ENCODE measurements at regions of chr22 and their contacts with region 1.

Region 1: DNA sequence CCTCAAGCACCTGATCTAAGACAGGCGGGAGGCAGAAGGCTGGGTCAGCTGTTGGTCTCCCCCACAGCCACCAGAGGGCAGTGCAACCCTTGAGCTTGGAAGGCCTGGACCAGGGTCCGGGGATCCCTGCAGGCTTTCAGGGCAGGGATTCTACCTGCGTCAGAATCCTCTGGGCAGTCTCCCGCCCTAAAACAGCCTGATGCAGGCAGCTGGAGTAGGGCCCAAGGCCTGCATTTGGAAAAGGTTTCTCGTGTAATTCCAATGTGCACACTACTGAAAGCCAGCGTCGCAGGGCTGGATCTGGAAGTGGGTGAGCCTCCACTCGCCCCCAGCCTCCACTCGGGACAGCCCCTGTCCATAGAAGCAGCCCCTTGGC is 31.8 kb downstream of the BID start:
- DNase-seq: no peak
- ATAC-seq: peak; percentile 98
- H3K4me3 ChIP-seq: no peak overlapping the region
- H3K27ac ChIP-seq: no peak overlapping the region
- H3K4me1 ChIP-seq: peaks cover 7% of the 10 kb centered on the region
- H3K27me3 ChIP-seq: no peaks in the 10 kb centered on the region
- CTCF ChIP-seq: peak; percentile 84 to 94 (median 90)
- EP300 ChIP-seq: no peak
- POLR2A ChIP-seq: no peak; the same call in 1 of the 2 replicates
- RAD21 ChIP-seq: peak; percentile 98

Region 2: DNA sequence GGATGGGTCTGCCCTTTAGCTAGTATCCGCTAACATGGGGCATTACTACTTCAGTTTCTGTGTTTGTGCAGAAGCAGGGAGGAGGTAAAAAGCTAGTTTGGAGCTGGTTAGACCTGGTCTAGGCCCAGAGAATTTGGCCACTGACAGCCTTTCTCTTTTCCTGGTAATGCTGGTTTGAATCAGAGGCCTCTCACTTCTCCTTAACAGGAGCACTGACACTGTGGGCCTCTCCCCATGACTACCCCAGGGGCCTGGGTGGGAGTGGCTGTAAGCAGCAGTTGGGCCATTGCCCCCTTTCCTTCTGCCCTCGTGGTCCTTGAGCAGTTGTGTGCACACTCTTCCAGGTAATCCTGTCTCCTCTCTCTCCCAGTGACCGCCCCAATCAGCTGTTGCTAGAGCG is 187.7 kb before region 1 on chr22:
- CTCF ChIA-PET with region 1: interaction called, 32 read pairs
- POLR2A ChIA-PET with region 1: no interaction called
- RAD21 ChIA-PET with region 1: interaction called, 4 read pairs
- SMC1A ChIA-PET with region 1: interaction called, 9 read pairs
- in situ Hi-C with region 1: no loop called
- intact Hi-C with region 1: loop called (anchors 5 kb)
- DNase-seq: no peak
- ATAC-seq: no peak
- H3K4me3 ChIP-seq: no peak overlapping the region
- H3K27ac ChIP-seq: no peak overlapping the region
- H3K4me1 ChIP-seq: no peaks in the 10 kb centered on the region
- H3K27me3 ChIP-seq: no peaks in the 10 kb centered on the region; a peak in 1 of 4 replicates
- CTCF ChIP-seq: no peak
- EP300 ChIP-seq: no peak
- POLR2A ChIP-seq: no peak
- RAD21 ChIP-seq: no peak

Region 3: GRCh38 chr22:17754233-17754925 is 11.9 kb after region 1 on chr22:
- CTCF ChIA-PET with region 1: interaction called, 10 read pairs
- POLR2A ChIA-PET with region 1: interaction called, 3 read pairs
- RAD21 ChIA-PET with region 1: interaction called, 3 read pairs
- SMC1A ChIA-PET with region 1: no interaction called
- in situ Hi-C with region 1: no loop called
- intact Hi-C with region 1: no loop called
- DNase-seq: no peak
- ATAC-seq: peak; percentile 82
- H3K4me3 ChIP-seq: no peak overlapping the region
- H3K27ac ChIP-seq: no peak overlapping the region
- H3K4me1 ChIP-seq: no peaks in the 10 kb centered on the region
- H3K27me3 ChIP-seq: no peaks in the 10 kb centered on the region
- CTCF ChIP-seq: peak; percentile 30 to 57 (median 52); a peak in 4 of 6 replicates
- EP300 ChIP-seq: no peak
- POLR2A ChIP-seq: no peak
- RAD21 ChIP-seq: peak; percentile 45; the same call in 1 of the 2 replicates

Region 4: DNA sequence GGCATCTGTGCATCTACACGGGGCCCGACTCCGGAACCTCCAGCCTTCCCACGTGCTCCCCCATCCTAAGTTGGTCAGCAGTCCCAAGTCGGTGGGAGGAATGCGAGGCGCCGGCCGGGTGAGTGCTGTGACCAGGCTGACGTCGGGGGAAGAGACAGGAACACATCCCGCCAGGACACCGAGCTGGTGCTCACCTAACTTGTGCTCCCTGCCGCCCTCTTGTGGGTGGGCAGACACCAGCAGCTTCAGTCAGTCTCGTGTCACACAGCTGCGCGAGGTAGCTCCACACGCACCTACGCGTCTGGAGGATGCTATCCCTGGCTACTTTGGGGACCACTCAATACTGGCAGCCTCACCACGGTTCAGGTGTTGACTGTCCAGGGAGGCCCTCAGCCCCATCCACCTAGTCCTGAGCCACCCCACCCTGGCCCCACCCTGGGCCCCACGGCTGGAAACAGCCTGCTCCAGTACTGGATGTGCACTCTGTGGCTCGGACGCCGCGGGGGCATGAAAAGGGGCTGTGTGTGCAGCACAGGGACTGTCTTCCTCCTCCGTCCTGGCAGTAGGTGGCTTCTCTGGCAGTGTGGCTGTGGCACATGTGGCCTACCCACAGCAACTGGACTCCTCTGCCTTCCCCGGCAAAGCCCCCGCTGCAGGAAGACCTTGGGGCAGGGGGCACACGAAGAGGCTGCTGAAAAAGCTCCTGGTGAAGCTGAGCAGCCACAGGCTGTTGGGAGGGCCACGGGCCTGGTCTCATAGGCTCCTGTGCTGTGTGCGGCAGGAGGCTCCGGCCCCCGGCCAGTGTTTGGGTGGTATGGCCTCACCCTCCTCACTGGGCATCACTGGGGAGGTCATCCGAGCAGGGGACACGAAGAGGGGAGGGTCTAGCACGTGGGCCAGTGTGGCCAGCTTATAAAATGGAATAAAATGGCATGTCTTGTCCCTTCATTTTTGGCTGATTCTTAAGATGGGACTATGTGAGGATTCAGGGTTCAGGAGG is 43.0 kb after region 1 on chr22:
- CTCF ChIA-PET with region 1: interaction called, 101 read pairs
- POLR2A ChIA-PET with region 1: interaction called, 5 read pairs
- RAD21 ChIA-PET with region 1: interaction called, 58 read pairs
- SMC1A ChIA-PET with region 1: interaction called, 46 read pairs
- in situ Hi-C with region 1: no loop called
- intact Hi-C with region 1: loop called (anchors 1 kb)
- DNase-seq: no peak
- ATAC-seq: peak; percentile 67
- H3K4me3 ChIP-seq: no peak overlapping the region
- H3K27ac ChIP-seq: no peak overlapping the region
- H3K4me1 ChIP-seq: peaks cover 26% of the 10 kb centered on the region
- H3K27me3 ChIP-seq: no peaks in the 10 kb centered on the region
- CTCF ChIP-seq: peak; percentile 74 to 84 (median 79); a peak in 5 of 6 replicates
- EP300 ChIP-seq: no peak
- POLR2A ChIP-seq: peak; percentile 59; the same call in 1 of the 2 replicates
- RAD21 ChIP-seq: peak; percentile 51

Region 5: DNA sequence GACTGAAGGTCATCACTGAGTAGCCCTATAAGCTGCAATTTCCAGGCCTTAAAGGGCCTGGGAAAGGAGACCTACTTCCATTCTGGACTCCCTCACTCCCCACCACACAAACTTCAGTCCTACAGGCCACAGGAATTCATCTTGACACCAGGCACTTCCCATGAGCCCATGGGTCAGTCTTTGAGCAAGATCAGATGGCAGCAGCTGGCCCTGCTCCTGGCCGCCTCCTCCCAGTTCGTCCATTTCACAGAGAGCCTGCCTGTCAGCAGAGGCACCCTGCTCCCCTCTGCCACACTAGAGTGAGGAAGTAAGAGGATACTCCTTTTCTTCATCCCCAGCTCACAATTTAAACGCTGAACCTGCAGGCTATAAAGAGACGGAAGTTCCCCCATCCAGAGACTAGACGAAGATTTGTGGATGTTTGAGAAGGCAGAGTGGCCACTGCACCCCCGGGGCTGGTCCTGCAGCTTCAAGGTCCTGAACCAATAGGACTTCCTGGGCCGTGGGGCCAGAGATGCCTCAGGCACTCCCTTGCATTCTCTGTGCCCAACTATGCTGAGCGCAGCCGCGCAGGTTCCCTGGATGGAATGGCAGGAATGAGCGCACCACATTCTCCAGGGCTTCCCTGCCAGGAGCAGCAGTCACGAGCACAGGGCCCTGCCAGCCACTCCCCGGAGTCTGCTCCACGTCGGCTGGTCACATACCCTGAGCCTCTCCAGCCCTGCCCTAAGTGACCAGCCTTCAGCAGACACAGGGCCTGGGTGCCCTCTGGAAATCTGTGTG is 65.3 kb after region 1 on chr22:
- CTCF ChIA-PET with region 1: interaction called, 3 read pairs
- POLR2A ChIA-PET with region 1: no interaction called
- RAD21 ChIA-PET with region 1: interaction called, 3 read pairs
- SMC1A ChIA-PET with region 1: no interaction called
- in situ Hi-C with region 1: loop called (anchors 10 kb)
- intact Hi-C with region 1: no loop called
- DNase-seq: no peak
- ATAC-seq: no peak
- H3K4me3 ChIP-seq: no peak overlapping the region
- H3K27ac ChIP-seq: no peak overlapping the region
- H3K4me1 ChIP-seq: peaks cover 1% of the 10 kb centered on the region; the same call in 1 of the 2 replicates
- H3K27me3 ChIP-seq: no peaks in the 10 kb centered on the region
- CTCF ChIP-seq: no peak
- EP300 ChIP-seq: no peak
- POLR2A ChIP-seq: no peak
- RAD21 ChIP-seq: no peak

Measured in GM12878 (cell line).